CD14-positive monocyte (primary cell): ENCODE measurements at regions of chr20 and their contacts with region 1.

Region 1: GRCh38 chr20:31822421-31823330 is 3.5 kb downstream of the MYLK2 start:
- DNase-seq: peak; percentile 54 to 68 (median 60)
- H3K4me3 ChIP-seq: no peak overlapping the region
- H3K4me3 Mint-ChIP-seq: peak overlapping the region; percentile 24 to 74
- H3K27ac ChIP-seq: no peak overlapping the region
- H3K27ac Mint-ChIP-seq: no peak overlapping the region
- H3K4me1 ChIP-seq: peaks cover 3 to 9% of the 10 kb centered on the region in 2 donors
- H3K4me1 Mint-ChIP-seq: peaks cover 4% of the 10 kb centered on the region
- H3K27me3 ChIP-seq: peaks cover 0 to 6% of the 10 kb centered on the region in 2 donors
- H3K27me3 Mint-ChIP-seq: peaks cover 2 to 8% (median 3%) of the 10 kb centered on the region in 3 donors
- CTCF ChIP-seq: peak; percentile 98

Region 2: DNA sequence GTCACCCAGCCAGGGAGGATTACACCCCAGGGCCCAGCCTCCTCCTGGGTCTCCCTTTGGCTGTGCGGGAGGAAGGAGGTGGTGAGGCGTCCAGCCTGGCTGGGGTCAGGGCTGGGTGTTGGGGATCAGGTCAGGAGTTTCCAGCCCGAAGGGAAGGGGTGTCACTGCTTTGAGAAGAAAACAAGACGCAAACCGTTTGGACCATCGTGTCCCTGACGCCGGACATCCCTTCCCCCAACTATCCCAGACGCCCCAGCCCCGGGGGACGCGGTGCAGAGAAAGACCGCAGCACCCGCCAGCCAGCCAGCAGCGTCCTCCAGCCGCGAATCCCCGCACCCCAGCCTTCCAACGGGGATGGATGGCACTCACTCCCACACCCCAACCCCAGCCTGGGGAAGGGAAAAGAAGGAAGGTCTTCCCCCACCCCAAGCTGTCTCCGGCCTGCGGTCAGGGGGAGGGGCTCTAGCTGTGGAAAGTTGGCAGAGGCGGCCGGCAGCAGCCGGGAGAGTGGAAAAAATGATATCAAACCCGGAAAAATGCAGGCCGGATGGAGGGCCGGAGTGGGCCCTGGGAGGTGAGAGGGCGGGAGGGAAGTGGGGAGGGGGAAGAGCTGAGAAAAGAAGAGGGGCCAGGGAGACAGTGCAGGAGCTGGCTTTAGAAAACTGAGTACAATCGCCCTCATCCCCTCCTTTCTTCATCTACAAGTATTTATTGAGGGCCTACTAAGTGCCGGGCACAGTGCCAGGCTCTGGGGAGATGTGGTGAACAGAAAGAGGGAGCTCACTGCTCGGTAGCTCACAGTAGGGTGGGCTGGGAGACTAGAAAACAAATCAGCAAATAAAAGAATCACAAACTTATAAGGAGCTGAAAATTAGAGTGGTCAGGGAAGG is 337.0 kb before region 1 on chr20:
- intact Hi-C with region 1: no loop called
- DNase-seq: no peak
- H3K4me3 ChIP-seq: peak overlapping the region in 1 of 3 experiments; percentile 16
- H3K4me3 Mint-ChIP-seq: peak overlapping the region in 1 of 2 donors; percentile 72
- H3K27ac ChIP-seq: no peak overlapping the region
- H3K27ac Mint-ChIP-seq: no peak overlapping the region
- H3K4me1 ChIP-seq: peaks cover 4 to 8% of the 10 kb centered on the region in 2 donors
- H3K4me1 Mint-ChIP-seq: peaks cover 11% of the 10 kb centered on the region
- H3K27me3 ChIP-seq: peaks cover 13 to 27% of the 10 kb centered on the region in 2 donors
- H3K27me3 Mint-ChIP-seq: peaks cover 35 to 49% (median 37%) of the 10 kb centered on the region in 3 donors
- CTCF ChIP-seq: no peak

Region 3: DNA sequence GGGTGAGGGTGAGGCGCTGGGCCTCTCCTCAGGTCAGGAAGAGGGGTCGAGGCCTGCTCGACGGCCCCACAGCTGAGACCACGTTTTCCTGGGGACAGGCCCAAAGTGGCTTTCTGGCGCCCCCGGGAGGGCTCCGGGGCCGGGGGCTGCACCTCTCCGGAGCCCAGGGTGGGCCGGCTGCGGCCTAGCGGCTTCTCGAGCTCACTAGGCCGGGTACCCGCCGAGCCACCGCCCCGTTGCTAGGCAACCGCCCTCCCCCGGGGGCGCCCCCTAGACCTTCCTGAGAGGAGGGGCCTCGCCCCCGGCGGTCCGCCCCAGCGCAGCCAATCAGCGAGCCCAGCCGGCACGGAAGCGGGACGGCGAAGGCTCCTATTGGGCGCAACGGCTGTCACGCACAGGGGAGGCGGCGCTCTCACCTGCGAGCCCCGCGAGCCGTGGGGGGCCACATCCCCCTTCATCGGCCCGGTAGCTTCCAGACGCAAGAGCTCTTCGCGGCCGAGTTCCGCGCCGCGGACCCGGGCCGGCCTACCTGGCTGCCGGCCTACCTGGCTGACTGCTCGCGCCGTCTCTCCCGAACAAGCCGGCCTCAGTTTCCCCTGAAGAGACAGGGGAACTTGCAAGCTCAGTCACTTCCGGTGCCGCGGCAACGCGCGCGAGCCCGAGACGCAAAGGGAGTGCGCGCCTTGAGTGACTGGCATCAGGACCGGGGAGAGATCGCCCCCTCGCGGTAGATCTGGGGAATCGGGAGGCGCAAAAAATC is 99.2 kb before region 1 on chr20:
- intact Hi-C with region 1: no loop called
- DNase-seq: peak; percentile 93 to 98 (median 97)
- H3K4me3 ChIP-seq: peak overlapping the region; percentile 77 to 98 (median 81)
- H3K4me3 Mint-ChIP-seq: peak overlapping the region; percentile 96
- H3K27ac ChIP-seq: peak overlapping the region; percentile 91 to 99
- H3K27ac Mint-ChIP-seq: peak overlapping the region; percentile 90 to 98 (median 94)
- H3K4me1 ChIP-seq: peaks cover 45 to 59% of the 10 kb centered on the region in 2 donors
- H3K4me1 Mint-ChIP-seq: peaks cover 61% of the 10 kb centered on the region
- H3K27me3 ChIP-seq: no peaks in the 10 kb centered on the region
- H3K27me3 Mint-ChIP-seq: peaks cover 0 to 2% (median 0%) of the 10 kb centered on the region in 3 donors
- CTCF ChIP-seq: peak; percentile 89

Region 4: GRCh38 chr20:31770243-31770642 is 52.4 kb before region 1 on chr20:
- intact Hi-C with region 1: no loop called
- DNase-seq: no peak
- H3K4me3 ChIP-seq: no peak overlapping the region
- H3K4me3 Mint-ChIP-seq: no peak overlapping the region
- H3K27ac ChIP-seq: no peak overlapping the region
- H3K27ac Mint-ChIP-seq: no peak overlapping the region
- H3K4me1 ChIP-seq: no peaks in the 10 kb centered on the region
- H3K4me1 Mint-ChIP-seq: no peaks in the 10 kb centered on the region
- H3K27me3 ChIP-seq: no peaks in the 10 kb centered on the region
- H3K27me3 Mint-ChIP-seq: no peaks in the 10 kb centered on the region
- CTCF ChIP-seq: no peak

Region 5: DNA sequence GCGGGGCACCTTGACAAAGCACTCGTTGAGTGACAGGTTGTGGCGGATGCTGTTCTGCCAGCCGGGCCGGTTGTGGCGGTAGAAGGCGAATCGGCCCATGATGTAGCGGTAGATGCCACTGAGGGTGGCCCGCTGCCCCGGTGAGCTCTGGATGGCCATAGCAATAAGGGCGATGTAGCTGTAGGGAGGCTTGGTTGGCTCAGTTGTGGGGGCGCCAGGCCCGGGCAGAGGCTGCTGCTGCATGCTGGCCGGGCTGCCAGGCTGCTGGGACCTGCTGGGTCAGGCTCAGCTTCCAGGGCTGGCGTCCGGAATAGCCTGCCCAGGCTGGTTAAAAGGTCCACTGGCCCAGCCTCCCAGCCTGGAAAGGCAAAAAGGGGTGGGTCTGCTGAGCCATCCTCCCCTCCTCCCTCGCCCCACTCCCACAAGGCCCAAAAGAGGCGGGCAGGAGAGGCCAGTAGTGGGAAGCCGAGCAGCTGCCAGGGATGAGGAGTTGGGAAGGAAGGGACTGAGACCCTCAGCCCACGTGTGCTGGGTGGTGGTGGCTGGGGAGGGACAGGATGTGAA is 22.7 kb after region 1 on chr20 and contains the start of gene FOXS1:
- intact Hi-C with region 1: loop called (anchors 1 to 2 kb)
- DNase-seq: no peak
- H3K4me3 ChIP-seq: no peak within 1 kb of the TSS
- H3K4me3 Mint-ChIP-seq: no peak within 1 kb of the TSS
- H3K27ac ChIP-seq: no peak within 1 kb of the TSS
- H3K27ac Mint-ChIP-seq: no peak within 1 kb of the TSS
- H3K4me1 ChIP-seq: no peaks in the 10 kb centered on the region
- H3K4me1 Mint-ChIP-seq: no peaks in the 10 kb centered on the region
- H3K27me3 ChIP-seq: peaks cover 0 to 21% of the 10 kb centered on the region in 2 donors
- H3K27me3 Mint-ChIP-seq: peaks cover 14 to 35% (median 15%) of the 10 kb centered on the region in 3 donors
- CTCF ChIP-seq: no peak
- polyA plus RNA-seq, gene FOXS1: not detected